ENCODE measurements at regions of chr11 and their contacts with region 1.

Region 1: GRCh38 chr11:121318848-121319834 is 26.6 kb downstream of the SC5D start:
- DNase-seq: peak; percentile 82
- H3K4me3 ChIP-seq: no peak overlapping the region
- H3K27ac ChIP-seq: peak overlapping the region; percentile 1
- H3K4me1 ChIP-seq: peaks cover 58% of the 10 kb centered on the region
- CTCF ChIP-seq: peak; percentile 99

Region 2: GRCh38 chr11:121304759-121305158 is 14.4 kb before region 1 on chr11:
- CTCF ChIA-PET with region 1: no interaction called
- POLR2A ChIA-PET with region 1: no interaction called
- intact Hi-C with region 1: no loop called
- DNase-seq: no peak
- H3K4me3 ChIP-seq: no peak overlapping the region
- H3K27ac ChIP-seq: no peak overlapping the region
- H3K4me1 ChIP-seq: peaks cover 2% of the 10 kb centered on the region
- CTCF ChIP-seq: no peak

Region 3: DNA sequence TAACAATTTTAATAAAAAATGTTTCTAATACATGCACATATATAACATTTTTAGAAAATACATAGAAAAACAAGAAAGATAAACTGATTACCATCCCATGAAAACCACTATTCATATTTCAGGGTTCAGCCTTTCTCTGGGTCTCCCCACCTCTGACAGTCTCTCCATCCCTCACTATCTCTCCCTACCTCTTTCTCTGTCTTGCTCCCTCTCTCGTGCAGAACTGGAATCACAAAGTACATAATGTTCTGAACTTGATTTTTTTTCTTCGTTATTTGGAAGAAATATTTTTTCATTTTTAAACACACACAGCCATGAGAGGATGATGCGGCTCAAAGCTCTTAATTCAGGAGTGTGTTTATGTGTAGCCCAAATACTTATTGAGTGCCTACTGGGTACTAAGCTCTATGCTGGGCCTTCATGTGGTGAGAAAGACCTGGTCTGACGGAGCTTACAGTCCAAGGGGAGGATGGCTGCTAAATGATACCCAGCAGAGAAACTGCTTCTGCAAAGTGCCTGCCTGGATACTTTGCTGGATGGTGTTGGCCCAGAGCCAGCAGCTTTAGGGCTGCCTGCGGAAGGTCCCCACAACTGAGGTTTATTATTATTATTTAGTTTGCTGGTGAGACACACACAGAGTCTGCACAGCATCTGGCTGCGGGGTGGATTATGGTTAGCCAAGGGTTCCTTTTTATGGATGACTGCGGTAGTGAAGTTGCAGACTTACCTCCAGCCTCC is 16.0 kb after region 1 on chr11:
- CTCF ChIA-PET with region 1: no interaction called
- POLR2A ChIA-PET with region 1: interaction called, 70 read pairs
- intact Hi-C with region 1: no loop called
- DNase-seq: peak; percentile 43
- H3K4me3 ChIP-seq: no peak overlapping the region
- H3K27ac ChIP-seq: peak overlapping the region; percentile 63
- H3K4me1 ChIP-seq: peaks cover 65% of the 10 kb centered on the region
- CTCF ChIP-seq: peak; percentile 78

Region 4: GRCh38 chr11:121426476-121427399 is 107.6 kb after region 1 on chr11:
- CTCF ChIA-PET with region 1: interaction called, 3 read pairs
- POLR2A ChIA-PET with region 1: interaction called, 37 read pairs
- intact Hi-C with region 1: loop called (anchors 1 kb)
- DNase-seq: peak; percentile 84
- H3K4me3 ChIP-seq: peak overlapping the region; percentile 44
- H3K27ac ChIP-seq: peak overlapping the region; percentile 99
- H3K4me1 ChIP-seq: peaks cover 98% of the 10 kb centered on the region
- CTCF ChIP-seq: peak; percentile 67

Region 5: DNA sequence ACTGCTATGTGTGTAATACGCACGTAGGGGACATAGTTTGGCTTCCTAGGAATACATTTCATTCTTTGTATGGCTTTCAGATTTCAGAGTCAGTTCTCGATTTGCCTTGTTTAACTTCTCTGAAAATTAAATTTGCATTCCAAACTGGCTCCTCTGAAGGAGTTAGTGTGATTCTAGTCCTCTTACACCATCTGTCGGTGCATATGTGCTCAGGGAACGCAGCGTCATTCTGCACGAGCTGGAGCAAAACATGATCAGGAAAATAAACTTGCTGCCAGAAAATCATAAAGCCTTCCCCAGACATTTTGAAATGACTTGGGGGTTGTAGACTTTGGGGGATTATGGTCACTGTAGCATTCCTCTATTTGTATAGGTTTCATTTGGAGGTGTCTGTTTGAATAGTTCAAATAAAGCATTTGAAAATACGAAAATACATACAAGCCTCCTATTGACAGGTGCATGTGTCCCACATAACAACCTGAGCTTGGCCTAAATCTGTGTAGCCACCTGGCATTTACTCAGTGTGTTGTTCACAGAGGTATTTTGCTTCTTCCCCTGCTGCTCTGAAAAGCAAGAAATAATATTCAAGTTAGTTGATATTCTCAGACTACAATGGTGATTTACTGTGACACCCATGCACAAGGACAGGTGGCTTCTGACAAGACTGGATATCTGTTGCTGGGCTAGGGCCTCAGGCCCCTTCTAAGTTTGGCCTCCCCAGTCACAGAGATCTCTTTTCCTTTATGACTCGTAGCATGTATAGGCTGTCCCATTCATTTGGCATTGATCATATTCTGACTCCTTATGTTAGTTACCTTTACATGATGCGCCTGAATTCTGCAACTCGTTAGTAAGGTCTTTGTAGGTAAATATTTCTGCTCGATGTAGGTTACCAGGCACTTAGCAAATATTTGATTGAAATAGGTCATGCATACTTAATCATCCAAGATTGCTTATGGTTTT is 215.3 kb after region 1 on chr11:
- CTCF ChIA-PET with region 1: no interaction called
- POLR2A ChIA-PET with region 1: interaction called, 4 read pairs
- intact Hi-C with region 1: loop called (anchors 1 kb)
- DNase-seq: peak; percentile 68
- H3K4me3 ChIP-seq: peak overlapping the region; percentile 35
- H3K27ac ChIP-seq: peak overlapping the region; percentile 84
- H3K4me1 ChIP-seq: peaks cover 81% of the 10 kb centered on the region
- CTCF ChIP-seq: peak; percentile 69

Region 6: DNA sequence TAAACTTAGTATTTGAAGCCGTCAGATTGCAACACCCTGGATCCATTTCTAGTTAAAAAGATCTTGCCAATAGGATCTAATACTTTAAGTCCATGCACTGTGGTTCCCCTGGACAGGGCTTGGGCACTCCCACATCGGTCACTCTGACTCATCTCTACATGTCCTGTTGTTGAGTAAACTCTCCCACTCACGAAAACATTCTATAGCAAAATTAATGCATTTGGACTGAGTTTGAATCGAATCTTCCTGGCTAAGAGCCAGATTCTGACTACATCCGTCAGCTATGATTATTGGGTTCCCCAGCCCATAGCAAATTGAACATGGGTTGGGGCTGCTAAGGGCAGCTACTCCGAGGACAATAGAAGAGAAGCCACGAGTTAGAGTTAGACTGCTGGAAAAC is 315.7 kb after region 1 on chr11:
- CTCF ChIA-PET with region 1: no interaction called
- POLR2A ChIA-PET with region 1: no interaction called
- intact Hi-C with region 1: no loop called
- DNase-seq: no peak
- H3K4me3 ChIP-seq: no peak overlapping the region
- H3K27ac ChIP-seq: no peak overlapping the region
- H3K4me1 ChIP-seq: no peaks in the 10 kb centered on the region
- CTCF ChIP-seq: no peak

Region 7: DNA sequence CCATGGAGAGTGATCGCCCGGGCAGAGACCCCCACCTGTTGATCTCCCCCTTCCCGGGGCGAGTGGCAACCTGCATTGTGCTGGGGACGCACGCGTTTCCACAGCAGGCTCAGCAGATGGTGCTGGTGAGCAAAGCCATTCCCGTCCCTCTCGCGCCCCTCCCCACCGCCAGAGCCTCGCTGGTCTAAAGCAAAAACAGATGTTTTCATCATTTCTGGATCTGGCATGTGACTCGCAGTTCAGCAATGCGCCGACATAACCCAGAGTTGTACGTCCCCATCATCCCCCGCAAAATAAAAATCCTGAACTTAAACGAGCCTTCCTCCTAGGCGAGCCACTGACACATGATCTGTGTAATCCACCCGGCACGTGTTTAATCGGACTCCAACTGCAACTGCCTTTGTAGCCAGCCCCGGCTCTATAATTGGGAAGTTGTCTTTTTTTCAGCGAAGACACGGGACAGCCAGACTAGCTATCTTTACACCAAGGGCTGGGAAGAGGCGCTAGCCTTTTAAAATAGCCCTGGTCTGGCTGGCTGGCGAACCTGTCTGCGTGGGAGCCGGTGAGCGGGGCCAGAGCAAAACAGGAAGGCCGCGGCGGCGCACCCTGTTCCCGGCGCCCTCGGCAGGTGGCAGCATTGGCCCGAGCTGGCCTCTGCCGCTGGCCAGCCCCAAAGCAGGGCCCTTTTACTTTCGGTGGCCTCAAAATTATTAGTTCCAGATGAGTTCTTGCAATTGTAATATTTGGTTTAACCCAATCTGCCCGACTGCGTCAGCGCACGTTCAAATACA is 336.6 kb after region 1 on chr11:
- CTCF ChIA-PET with region 1: no interaction called
- POLR2A ChIA-PET with region 1: no interaction called
- intact Hi-C with region 1: loop called (anchors 2 kb)
- DNase-seq: peak; percentile 80
- H3K4me3 ChIP-seq: peak overlapping the region; percentile 38
- H3K27ac ChIP-seq: no peak overlapping the region
- H3K4me1 ChIP-seq: peaks cover 13% of the 10 kb centered on the region
- CTCF ChIP-seq: peak; percentile 80

Measured in OCI-LY7 (cell line).